ENCODE measurements at regions of chr2 and their contacts with region 1.

Region 1: DNA sequence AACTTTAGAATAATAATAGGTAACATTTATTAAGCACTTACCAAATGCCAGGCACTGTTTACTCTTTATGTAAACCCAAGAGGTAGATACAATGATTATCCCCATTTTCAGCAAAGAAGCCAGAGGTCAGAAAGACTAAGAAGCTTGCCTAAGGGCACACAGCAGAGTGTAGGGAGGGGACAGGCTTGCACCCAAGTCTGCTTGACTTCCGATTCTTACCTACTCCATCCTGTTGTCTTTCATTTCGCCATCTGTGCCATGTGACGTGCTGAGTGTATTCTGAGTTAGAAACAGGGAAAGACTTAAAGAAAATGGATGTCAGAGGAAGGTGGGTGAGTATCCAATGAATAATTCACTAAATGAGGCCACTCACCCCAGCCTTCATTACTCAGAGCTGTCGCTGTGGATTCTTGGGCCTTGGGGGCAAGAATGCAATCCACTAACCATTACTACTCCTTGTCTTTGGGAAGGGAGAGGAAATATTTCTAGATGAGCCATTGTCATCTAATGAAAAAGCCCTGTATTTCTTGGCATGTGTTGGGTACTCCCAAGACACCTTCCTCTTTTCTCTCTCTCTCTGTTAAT is 76.4 kb upstream of the BCL11A start:
- DNase-seq: no peak
- H3K4me3 ChIP-seq: no peak overlapping the region
- H3K27ac ChIP-seq: no peak overlapping the region
- H3K4me1 ChIP-seq: peaks cover 0 to 8% (median 0%) of the 10 kb centered on the region in 4 experiments
- H3K27me3 ChIP-seq: peaks cover 0 to 3% (median 0%) of the 10 kb centered on the region in 5 experiments

Region 2: GRCh38 chr2:60560734-60561644 is 68.9 kb before region 1 on chr2:
- CTCF ChIA-PET with region 1: no interaction called
- POLR2A ChIA-PET with region 1: no interaction called
- DNase-seq: peak in 2 of 3 donors; percentile 76
- H3K4me3 ChIP-seq: no peak overlapping the region
- H3K27ac ChIP-seq: no peak overlapping the region
- H3K4me1 ChIP-seq: peaks cover 6 to 46% (median 24%) of the 10 kb centered on the region in 4 experiments
- H3K27me3 ChIP-seq: no peaks in the 10 kb centered on the region

Region 3: GRCh38 chr2:60597346-60597745 is 32.5 kb before region 1 on chr2:
- CTCF ChIA-PET with region 1: no interaction called
- POLR2A ChIA-PET with region 1: no interaction called
- DNase-seq: no peak
- H3K4me3 ChIP-seq: no peak overlapping the region
- H3K27ac ChIP-seq: no peak overlapping the region
- H3K4me1 ChIP-seq: no peaks in the 10 kb centered on the region
- H3K27me3 ChIP-seq: no peaks in the 10 kb centered on the region

Region 4: DNA sequence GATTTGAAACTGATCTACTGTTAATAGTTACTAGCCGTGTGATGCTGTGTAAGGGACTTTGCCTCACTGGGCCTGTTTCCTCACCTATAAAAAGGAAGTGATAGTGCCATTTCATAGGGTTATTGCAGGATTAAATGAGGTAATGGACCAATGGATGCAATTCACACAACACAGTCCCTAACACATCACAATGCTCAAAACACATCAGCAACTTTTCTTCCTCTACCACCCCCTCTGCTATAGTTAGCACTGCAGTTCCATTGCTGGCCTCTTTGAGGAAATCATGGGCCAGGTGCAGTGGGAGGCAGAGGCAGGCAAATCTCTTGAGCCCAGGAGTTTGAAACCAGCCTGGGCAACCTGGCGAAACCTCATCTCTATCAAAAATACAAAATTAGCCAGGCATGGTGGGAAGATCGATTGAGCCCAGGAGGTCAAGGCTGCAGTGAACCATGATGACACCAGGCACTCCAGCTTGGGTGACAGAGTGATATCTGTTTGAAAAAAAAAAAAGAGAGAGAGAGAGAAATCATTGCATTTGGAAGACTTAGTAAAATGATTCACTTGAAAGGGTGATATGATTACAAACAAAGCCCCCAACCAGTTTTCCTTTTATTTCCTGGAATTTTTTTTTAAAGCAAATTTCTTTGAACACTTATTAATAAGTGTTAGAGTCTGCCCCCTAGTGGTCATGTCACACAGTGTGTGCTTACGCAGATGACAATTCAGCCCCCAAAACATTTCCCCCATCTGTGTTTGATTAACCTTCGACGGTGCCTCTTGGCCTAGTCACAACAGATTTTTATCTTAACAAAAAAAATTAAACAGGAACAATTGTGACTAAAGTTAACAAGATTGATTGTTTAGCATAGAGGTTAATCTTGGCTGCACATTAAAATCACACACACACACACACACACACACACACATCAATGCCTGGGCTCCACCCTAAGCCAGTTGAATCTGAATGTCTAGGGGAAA is 12.2 kb after region 1 on chr2:
- CTCF ChIA-PET with region 1: interaction called, 13 read pairs
- POLR2A ChIA-PET with region 1: no interaction called
- DNase-seq: peak; percentile 76 to 85 (median 85)
- H3K4me3 ChIP-seq: no peak overlapping the region
- H3K27ac ChIP-seq: no peak overlapping the region
- H3K4me1 ChIP-seq: peaks cover 0 to 2% (median 0%) of the 10 kb centered on the region in 4 experiments
- H3K27me3 ChIP-seq: no peaks in the 10 kb centered on the region